MCF 10A (cell line): ENCODE measurements at regions of chr9 and their contacts with region 1.

Region 1: GRCh38 chr9:113578882-113579282 is 115.4 kb downstream of the RGS3 start:
- DNase-seq: peak; percentile 94
- H3K4me3 Mint-ChIP-seq: no peak overlapping the region
- H3K27ac Mint-ChIP-seq: peak overlapping the region; percentile 92
- H3K4me1 Mint-ChIP-seq: peaks cover 62% of the 10 kb centered on the region
- H3K27me3 Mint-ChIP-seq: no peaks in the 10 kb centered on the region
- CTCF ChIP-seq: no peak

Region 2: DNA sequence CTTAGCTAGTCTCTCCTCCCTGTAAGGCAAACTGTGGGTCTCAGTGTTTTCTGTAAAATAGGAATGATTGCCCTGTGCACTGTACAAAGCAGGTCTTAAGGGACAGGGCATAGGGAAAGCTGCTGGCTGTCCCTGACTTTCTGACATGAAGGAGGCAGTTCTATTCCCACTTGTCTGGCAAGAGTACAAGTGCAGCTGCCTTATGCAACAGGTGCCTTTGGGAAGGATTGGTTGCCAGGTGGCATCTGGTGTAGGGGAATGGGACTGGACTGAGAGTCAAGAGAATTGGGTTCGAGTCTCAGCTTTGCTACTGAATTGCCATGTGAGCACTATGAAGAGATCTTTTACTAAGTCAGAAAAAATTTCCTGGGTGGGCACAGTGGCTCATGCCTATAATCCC is 219.5 kb before region 1 on chr9:
- CTCF ChIA-PET with region 1: no interaction called
- POLR2A ChIA-PET with region 1: no interaction called
- intact Hi-C with region 1: no loop called
- DNase-seq: no peak
- H3K4me3 Mint-ChIP-seq: no peak overlapping the region
- H3K27ac Mint-ChIP-seq: no peak overlapping the region
- H3K4me1 Mint-ChIP-seq: peaks cover 6% of the 10 kb centered on the region
- H3K27me3 Mint-ChIP-seq: peaks cover 15% of the 10 kb centered on the region
- CTCF ChIP-seq: no peak

Region 3: GRCh38 chr9:113446323-113446740 is 132.6 kb before region 1 on chr9:
- CTCF ChIA-PET with region 1: interaction called, 21 read pairs
- POLR2A ChIA-PET with region 1: interaction called, 3 read pairs
- intact Hi-C with region 1: no loop called
- DNase-seq: peak; percentile 51
- H3K4me3 Mint-ChIP-seq: no peak overlapping the region
- H3K27ac Mint-ChIP-seq: no peak overlapping the region
- H3K4me1 Mint-ChIP-seq: no peaks in the 10 kb centered on the region
- H3K27me3 Mint-ChIP-seq: no peaks in the 10 kb centered on the region
- CTCF ChIP-seq: peak; percentile 66

Region 4: GRCh38 chr9:113564498-113565237 is 14.2 kb before region 1 on chr9:
- CTCF ChIA-PET with region 1: interaction called, 10 read pairs
- POLR2A ChIA-PET with region 1: interaction called, 12 read pairs
- intact Hi-C with region 1: no loop called
- DNase-seq: peak; percentile 84
- H3K4me3 Mint-ChIP-seq: peak overlapping the region; percentile 73
- H3K27ac Mint-ChIP-seq: peak overlapping the region; percentile 75
- H3K4me1 Mint-ChIP-seq: peaks cover 24% of the 10 kb centered on the region
- H3K27me3 Mint-ChIP-seq: no peaks in the 10 kb centered on the region
- CTCF ChIP-seq: no peak